ENCODE measurements at regions of chr7 and their contacts with region 1.

Region 1: GRCh38 chr7:152145853-152146466 is 120.5 kb downstream of the GALNT11 start:
- DNase-seq: peak in 11 of 14 experiments; percentile 17 to 69 (median 30)
- ATAC-seq: no peak
- H3K4me3 ChIP-seq: no peak overlapping the region
- H3K4me3 Mint-ChIP-seq: peak overlapping the region; percentile 50
- H3K27ac ChIP-seq: peak overlapping the region; percentile 26 to 77
- H3K27ac Mint-ChIP-seq: peak overlapping the region; percentile 96
- H3K4me1 ChIP-seq: peaks cover 43% of the 10 kb centered on the region
- H3K4me1 Mint-ChIP-seq: peaks cover 48% of the 10 kb centered on the region
- H3K27me3 ChIP-seq: no peaks in the 10 kb centered on the region
- H3K27me3 Mint-ChIP-seq: no peaks in the 10 kb centered on the region
- CTCF ChIP-seq: peak; percentile 66

Region 2: DNA sequence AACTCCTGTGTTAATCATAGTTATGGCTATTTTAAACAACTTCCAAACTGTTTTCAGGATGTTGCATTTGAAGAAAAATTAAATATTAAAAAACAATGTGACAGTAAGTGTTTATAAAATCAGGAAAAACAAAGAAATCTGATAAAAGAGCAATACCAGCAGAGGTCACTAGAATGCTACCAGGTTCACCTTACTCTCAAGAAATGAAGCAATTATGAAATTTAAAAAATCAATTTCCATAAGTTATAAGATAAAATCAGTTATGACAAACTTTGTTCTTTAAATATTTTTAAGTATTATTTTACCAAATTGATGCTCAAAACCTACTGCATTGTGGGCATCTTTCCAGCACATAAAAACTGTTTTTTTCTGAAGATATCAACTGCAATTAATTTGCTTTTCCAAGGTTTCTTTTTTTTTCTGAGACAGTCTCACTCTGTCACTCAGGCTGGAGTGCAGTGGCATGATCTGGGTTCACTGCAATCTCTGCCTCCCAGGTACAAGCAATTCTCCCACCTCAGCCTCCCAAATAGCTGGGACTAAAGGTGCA is 575.5 kb before region 1 on chr7:
- CTCF ChIA-PET with region 1: no interaction called
- POLR2A ChIA-PET with region 1: no interaction called
- intact Hi-C with region 1: loop called in 1 of 2 experiments (anchors 10 kb)
- DNase-seq: peak in 2 of 14 experiments; percentile 24 to 32
- ATAC-seq: no peak
- H3K4me3 ChIP-seq: no peak overlapping the region
- H3K4me3 Mint-ChIP-seq: no peak overlapping the region
- H3K27ac ChIP-seq: no peak overlapping the region
- H3K27ac Mint-ChIP-seq: no peak overlapping the region
- H3K4me1 ChIP-seq: no peaks in the 10 kb centered on the region
- H3K4me1 Mint-ChIP-seq: no peaks in the 10 kb centered on the region
- H3K27me3 ChIP-seq: no peaks in the 10 kb centered on the region
- H3K27me3 Mint-ChIP-seq: no peaks in the 10 kb centered on the region
- CTCF ChIP-seq: peak; percentile 49

Region 3: GRCh38 chr7:151936207-151936606 is 209.8 kb before region 1 on chr7:
- CTCF ChIA-PET with region 1: no interaction called
- POLR2A ChIA-PET with region 1: interaction called, 5 read pairs
- intact Hi-C with region 1: loop called (anchors 1 to 10 kb)
- DNase-seq: peak in 3 of 14 experiments; percentile 76 to 84 (median 77)
- ATAC-seq: peak; percentile 88
- H3K4me3 ChIP-seq: peak overlapping the region; percentile 38
- H3K4me3 Mint-ChIP-seq: peak overlapping the region; percentile 87
- H3K27ac ChIP-seq: peak overlapping the region; percentile 49 to 80
- H3K27ac Mint-ChIP-seq: peak overlapping the region; percentile 89
- H3K4me1 ChIP-seq: peaks cover 18% of the 10 kb centered on the region
- H3K4me1 Mint-ChIP-seq: peaks cover 25% of the 10 kb centered on the region
- H3K27me3 ChIP-seq: no peaks in the 10 kb centered on the region
- H3K27me3 Mint-ChIP-seq: no peaks in the 10 kb centered on the region
- CTCF ChIP-seq: no peak

Region 4: GRCh38 chr7:152025077-152025936 is 120.7 kb before region 1 on chr7 and contains the start of gene GALNT11:
- CTCF ChIA-PET with region 1: interaction called, 3 read pairs
- POLR2A ChIA-PET with region 1: interaction called, 15 read pairs
- intact Hi-C with region 1: loop called (anchors 1 to 2 kb)
- DNase-seq: peak; percentile 72 to 96 (median 82)
- ATAC-seq: peak; percentile 92
- H3K4me3 ChIP-seq: peak within 1 kb of the TSS; percentile 96
- H3K4me3 Mint-ChIP-seq: peak within 1 kb of the TSS; percentile 96
- H3K27ac ChIP-seq: peak within 1 kb of the TSS in 1 of 2 donors; percentile 82
- H3K27ac Mint-ChIP-seq: peak within 1 kb of the TSS; percentile 96
- H3K4me1 ChIP-seq: peaks cover 30% of the 10 kb centered on the region
- H3K4me1 Mint-ChIP-seq: peaks cover 42% of the 10 kb centered on the region
- H3K27me3 ChIP-seq: no peaks in the 10 kb centered on the region
- H3K27me3 Mint-ChIP-seq: no peaks in the 10 kb centered on the region
- CTCF ChIP-seq: no peak
- total RNA-seq, gene GALNT11: 20.7 to 22.2 TPM

Region 5: DNA sequence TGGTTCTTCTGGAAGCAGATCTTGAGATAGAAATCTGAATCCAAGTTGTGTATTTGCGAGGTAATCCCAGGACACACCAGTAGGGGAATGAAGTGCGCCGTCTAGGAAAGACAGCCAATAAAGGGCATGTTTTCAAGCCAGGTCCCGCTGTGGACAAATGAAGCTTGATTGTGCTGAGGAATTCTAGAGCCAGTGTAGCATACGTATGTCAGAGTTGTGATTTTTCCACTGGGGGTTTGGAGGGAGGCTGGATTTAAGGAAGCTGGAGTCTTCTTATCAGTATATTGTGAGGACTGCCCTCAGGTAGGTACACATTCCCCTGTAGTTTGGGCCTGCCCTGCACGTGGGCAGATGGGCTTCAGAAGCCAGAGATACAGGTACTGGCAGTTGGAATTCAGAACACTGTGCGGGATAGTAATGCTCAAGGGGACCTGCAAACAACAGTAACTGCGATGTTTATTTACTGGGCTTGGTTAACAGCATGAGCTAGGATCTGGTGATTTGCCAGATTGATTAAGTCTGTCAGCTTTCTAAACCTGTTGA is 69.6 kb before region 1 on chr7:
- CTCF ChIA-PET with region 1: no interaction called
- POLR2A ChIA-PET with region 1: no interaction called
- intact Hi-C with region 1: loop called in 1 of 2 experiments (anchors 5 kb)
- DNase-seq: peak in 4 of 14 experiments; percentile 2 to 32 (median 14)
- ATAC-seq: peak; percentile 44
- H3K4me3 ChIP-seq: no peak overlapping the region
- H3K4me3 Mint-ChIP-seq: no peak overlapping the region
- H3K27ac ChIP-seq: no peak overlapping the region
- H3K27ac Mint-ChIP-seq: no peak overlapping the region
- H3K4me1 ChIP-seq: no peaks in the 10 kb centered on the region
- H3K4me1 Mint-ChIP-seq: peaks cover 51% of the 10 kb centered on the region
- H3K27me3 ChIP-seq: no peaks in the 10 kb centered on the region
- H3K27me3 Mint-ChIP-seq: no peaks in the 10 kb centered on the region
- CTCF ChIP-seq: no peak